ENCODE measurements at regions of chr18 and their contacts with region 1.

Region 1: DNA sequence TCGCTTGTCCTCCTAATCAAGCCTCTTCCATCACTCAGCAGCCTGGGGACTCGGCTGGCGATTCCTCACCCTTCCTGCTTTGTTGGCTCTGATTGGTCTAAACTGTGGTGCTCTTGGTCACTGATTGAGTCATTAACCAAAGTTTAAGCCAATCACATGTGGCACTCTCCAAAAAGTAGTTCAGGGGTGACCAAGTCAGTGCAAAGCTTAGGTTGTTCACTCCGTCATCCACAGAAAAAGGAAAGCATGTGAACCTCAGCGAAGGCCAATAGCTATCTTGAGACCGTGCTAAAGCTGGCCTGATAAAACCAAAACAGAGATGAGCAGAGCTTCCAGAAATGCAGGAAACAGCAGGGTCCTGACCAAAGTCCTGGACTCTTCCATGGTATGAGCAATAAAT is 4.9 kb downstream of the ALPK2 start:
- DNase-seq: peak in 1 of 2 donors; percentile 42
- ATAC-seq: peak; percentile 48 to 86 (median 78)
- H3K4me3 ChIP-seq: no peak overlapping the region
- H3K27ac ChIP-seq: peak overlapping the region in 9 of 10 donors; percentile 36 to 91 (median 76)
- H3K4me1 ChIP-seq: peaks cover 0 to 25% (median 7%) of the 10 kb centered on the region in 9 donors
- H3K27me3 ChIP-seq: no peaks in the 10 kb centered on the region
- CTCF ChIP-seq: no peak

Region 2: GRCh38 chr18:58535340-58536201 is 88.4 kb before region 1 on chr18:
- intact Hi-C with region 1: loop called in 1 of 10 experiments (anchors 5 kb)
- DNase-seq: no peak
- ATAC-seq: peak in 5 of 8 donors; percentile 7 to 48 (median 34)
- H3K4me3 ChIP-seq: no peak overlapping the region
- H3K27ac ChIP-seq: peak overlapping the region in 3 of 10 donors; percentile 1 to 34 (median 10)
- H3K4me1 ChIP-seq: peaks cover 0 to 37% (median 6%) of the 10 kb centered on the region in 9 donors
- H3K27me3 ChIP-seq: no peaks in the 10 kb centered on the region
- CTCF ChIP-seq: no peak

Region 3: DNA sequence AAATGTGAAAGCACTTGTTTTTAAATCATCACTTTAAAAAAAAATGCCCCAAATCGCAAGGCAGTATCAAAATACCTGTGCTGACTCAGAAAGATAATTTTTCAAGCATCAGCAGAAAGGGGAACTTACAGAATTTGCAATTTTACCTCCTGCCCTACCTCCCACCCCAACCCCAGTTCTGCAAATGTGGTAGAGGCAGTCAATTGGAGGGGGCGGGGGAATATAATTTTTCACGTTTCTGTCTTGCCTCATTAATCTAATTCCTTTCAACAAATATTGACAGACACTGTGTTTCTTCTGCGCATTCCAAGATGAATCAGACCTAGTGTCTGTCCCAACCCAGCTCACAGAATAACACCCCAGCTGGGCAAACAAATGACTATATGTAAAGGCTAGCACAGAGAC is 72.0 kb before region 1 on chr18:
- intact Hi-C with region 1: loop called in 1 of 10 experiments (anchors 10 kb)
- DNase-seq: no peak
- ATAC-seq: no peak
- H3K4me3 ChIP-seq: no peak overlapping the region
- H3K27ac ChIP-seq: peak overlapping the region in 7 of 10 donors; percentile 11 to 89 (median 44)
- H3K4me1 ChIP-seq: peaks cover 0 to 37% (median 7%) of the 10 kb centered on the region in 9 donors
- H3K27me3 ChIP-seq: no peaks in the 10 kb centered on the region
- CTCF ChIP-seq: no peak

Region 4: DNA sequence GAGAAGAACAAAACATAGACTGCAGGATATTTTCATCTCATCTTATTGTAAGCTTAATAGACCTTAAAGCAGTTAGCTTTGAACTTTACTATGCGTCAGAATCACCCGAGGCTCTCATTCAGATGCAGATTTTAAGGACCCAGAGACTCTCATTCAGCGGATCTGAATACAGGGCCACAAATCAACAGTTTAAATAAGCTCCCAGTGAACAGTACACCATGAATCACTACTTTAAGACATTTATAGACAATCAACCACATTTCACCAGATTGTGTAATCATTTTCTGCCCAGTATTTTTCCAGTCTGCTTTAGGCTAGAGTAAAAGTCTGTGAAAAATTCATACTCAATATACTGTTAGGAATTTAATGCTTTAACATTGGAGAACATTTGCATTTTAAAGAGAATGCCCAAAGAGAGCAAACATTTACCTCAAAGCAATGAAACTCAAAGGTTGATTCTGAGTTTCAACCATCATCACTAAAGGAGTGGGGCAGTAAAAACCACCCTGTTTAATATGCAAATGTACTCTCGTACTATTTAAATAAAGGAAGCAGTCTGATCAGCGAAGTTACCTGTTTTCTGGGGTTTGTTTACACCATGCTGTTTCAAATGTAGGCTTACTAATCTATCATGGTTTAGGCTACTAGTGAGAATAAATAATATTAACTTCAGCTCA is 15.9 kb after region 1 on chr18:
- intact Hi-C with region 1: no loop called
- DNase-seq: no peak
- ATAC-seq: no peak
- H3K4me3 ChIP-seq: no peak overlapping the region
- H3K27ac ChIP-seq: no peak overlapping the region
- H3K4me1 ChIP-seq: peaks cover 0 to 33% (median 20%) of the 10 kb centered on the region in 9 donors
- H3K27me3 ChIP-seq: no peaks in the 10 kb centered on the region
- CTCF ChIP-seq: no peak

Region 5: DNA sequence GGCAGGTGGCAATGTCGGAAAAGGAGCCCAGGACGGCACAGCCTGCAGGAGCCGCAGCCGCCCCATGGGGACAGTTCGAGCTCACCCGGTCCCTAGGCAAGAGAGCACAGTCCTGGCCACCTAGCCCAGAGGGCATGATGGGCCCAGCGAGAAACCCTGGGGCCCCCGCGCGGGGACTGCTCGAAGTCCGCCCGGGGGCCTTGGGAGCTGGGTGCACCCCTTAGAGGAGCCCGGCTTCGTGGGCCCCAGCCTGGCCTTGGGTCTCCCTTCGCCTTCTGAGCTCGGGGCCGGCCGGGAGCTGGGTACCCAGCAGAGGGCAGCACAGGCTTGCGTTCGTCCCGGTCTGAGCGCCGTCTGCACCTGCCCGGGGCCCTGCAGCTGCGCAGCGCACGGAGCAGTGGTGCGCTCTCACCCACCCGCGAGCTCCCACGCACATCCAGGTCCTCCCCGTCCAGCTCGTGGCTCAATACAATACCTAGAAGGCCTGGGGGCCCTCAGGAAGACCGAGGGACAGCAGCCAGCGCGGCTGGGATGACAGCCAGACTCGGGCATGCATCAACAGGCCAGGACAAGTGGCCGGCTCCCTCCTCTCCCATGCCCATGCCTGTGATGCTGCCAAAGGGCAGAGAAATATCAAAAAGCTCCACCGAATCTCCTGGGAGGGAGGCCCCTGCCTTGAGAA is 144.4 kb after region 1 on chr18:
- intact Hi-C with region 1: loop called in 2 of 10 experiments (anchors 5 to 10 kb)
- DNase-seq: peak; percentile 69 to 77
- ATAC-seq: peak; percentile 88 to 94 (median 92)
- H3K4me3 ChIP-seq: peak overlapping the region in 9 of 10 donors; percentile 9 to 47 (median 33)
- H3K27ac ChIP-seq: peak overlapping the region in 4 of 10 donors; percentile 21 to 30 (median 24)
- H3K4me1 ChIP-seq: peaks cover 4 to 23% (median 13%) of the 10 kb centered on the region in 9 donors
- H3K27me3 ChIP-seq: peaks cover 0 to 48% (median 0%) of the 10 kb centered on the region in 7 donors
- CTCF ChIP-seq: peak; percentile 63 to 96 (median 85)

Measured in heart right ventricle (tissue), 16 donors.